Ovary (tissue), 10 donors: ENCODE measurements at regions of chr15 and their contacts with region 1.

Region 1: DNA sequence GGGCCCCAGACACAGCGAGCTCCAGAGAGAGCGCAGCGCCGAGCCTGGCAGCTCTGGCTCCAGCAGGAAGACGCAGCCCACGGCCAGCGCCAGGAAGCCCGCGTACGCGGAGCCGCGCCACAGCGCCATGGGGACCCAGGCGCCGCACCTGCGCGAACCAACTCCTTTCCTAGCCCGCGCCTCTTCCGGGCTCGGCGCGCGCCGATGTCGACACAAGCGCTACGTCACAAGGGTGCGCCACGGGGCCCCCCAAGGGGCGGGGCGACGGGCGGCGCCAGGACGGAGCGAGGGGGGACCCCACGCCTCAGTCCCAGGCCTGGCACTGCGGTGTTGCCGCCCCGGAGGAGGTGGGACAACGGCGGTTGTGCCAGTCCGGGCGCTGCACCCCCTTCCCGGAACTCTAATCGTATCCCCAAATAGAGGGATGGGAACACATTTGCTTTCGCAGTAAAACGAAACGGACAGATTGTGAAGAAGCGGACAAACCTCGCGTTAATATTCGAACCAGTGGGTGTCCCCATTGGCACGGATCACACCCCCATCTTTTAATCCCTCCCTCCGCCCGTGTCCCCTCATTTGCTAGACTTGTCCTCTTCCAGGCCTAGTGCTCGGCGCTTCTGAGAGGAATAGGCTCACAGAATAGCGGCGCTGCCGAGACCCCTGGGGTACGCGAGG is at the start of gene ADPGK:
- DNase-seq: peak; percentile 87 to 96 (median 93)
- H3K4me3 ChIP-seq: peak within 1 kb of the TSS; percentile 82
- H3K27ac ChIP-seq: peak within 1 kb of the TSS; percentile 79 to 94
- H3K4me1 ChIP-seq: peaks cover 10% of the 10 kb centered on the region
- H3K27me3 ChIP-seq: no peaks in the 10 kb centered on the region
- CTCF ChIP-seq: peak in 1 of 3 donors; percentile 45
- EP300 ChIP-seq: peak; percentile 35
- POLR2A ChIP-seq: peak; percentile 83
- total RNA-seq, gene ADPGK: 20.3 to 46.1 (median 28.1) TPM

Region 2: GRCh38 chr15:72473614-72474465 is 309.9 kb before region 1 on chr15 and contains the start of gene ARIH1:
- intact Hi-C with region 1: loop called in 1 of 4 experiments (anchors 10 kb)
- DNase-seq: peak; percentile 97 to 99 (median 99)
- H3K4me3 ChIP-seq: peak within 1 kb of the TSS; percentile 88
- H3K27ac ChIP-seq: peak within 1 kb of the TSS; percentile 99 to 100
- H3K4me1 ChIP-seq: peaks cover 11% of the 10 kb centered on the region
- H3K27me3 ChIP-seq: no peaks in the 10 kb centered on the region
- CTCF ChIP-seq: peak in 2 of 3 donors; percentile 7 to 23
- EP300 ChIP-seq: peak; percentile 59
- POLR2A ChIP-seq: peak; percentile 100
- total RNA-seq, gene ARIH1: 47.9 to 211 (median 171) TPM

Region 3: GRCh38 chr15:72722071-72722696 is 61.5 kb before region 1 on chr15:
- intact Hi-C with region 1: loop called in 1 of 4 experiments (anchors 10 kb)
- DNase-seq: peak; percentile 19 to 63 (median 51)
- H3K4me3 ChIP-seq: no peak overlapping the region
- H3K27ac ChIP-seq: no peak overlapping the region
- H3K4me1 ChIP-seq: no peaks in the 10 kb centered on the region
- H3K27me3 ChIP-seq: no peaks in the 10 kb centered on the region
- CTCF ChIP-seq: peak in 2 of 3 donors; percentile 23 to 31
- EP300 ChIP-seq: no peak
- POLR2A ChIP-seq: no peak

Region 4: GRCh38 chr15:73081321-73081958 is 297.7 kb after region 1 on chr15:
- intact Hi-C with region 1: loop called in 1 of 4 experiments (anchors 5 kb)
- DNase-seq: peak in 1 of 5 donors; percentile 27
- H3K4me3 ChIP-seq: no peak overlapping the region
- H3K27ac ChIP-seq: no peak overlapping the region
- H3K4me1 ChIP-seq: peaks cover 5% of the 10 kb centered on the region
- H3K27me3 ChIP-seq: no peaks in the 10 kb centered on the region
- CTCF ChIP-seq: peak; percentile 62 to 67 (median 66)
- EP300 ChIP-seq: no peak
- POLR2A ChIP-seq: no peak

Region 5: DNA sequence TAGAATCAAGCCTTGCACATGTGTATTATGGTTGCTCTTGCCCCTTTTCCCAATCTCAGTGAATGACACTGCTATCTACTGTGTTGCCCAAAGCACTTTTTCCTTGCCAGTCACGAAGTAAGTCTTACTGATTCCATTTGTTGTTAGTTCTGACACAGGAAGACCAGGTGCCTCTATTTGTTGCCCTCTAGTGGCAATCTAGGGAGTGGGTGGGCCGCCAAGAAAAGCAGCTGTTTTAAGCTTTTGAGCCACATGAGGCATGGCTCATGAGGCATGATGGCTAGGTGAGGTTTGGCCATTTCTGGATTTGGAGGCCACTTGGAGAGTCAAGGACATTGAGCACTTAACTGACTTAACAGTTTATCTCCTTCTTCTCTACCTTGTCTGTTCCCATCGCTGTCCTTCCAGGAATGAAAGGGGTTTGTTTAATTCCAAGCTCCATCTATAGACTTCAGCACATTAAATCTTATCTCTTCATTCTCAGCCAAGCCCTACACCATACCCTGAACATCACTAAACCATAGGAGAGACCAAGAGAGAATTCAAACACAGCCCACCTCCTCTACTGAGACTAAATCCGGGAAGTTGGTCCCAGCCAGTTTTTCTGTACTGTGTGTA is 481.9 kb after region 1 on chr15:
- intact Hi-C with region 1: loop called in 1 of 4 experiments (anchors 10 kb)
- DNase-seq: peak; percentile 12 to 50 (median 28)
- H3K4me3 ChIP-seq: no peak overlapping the region
- H3K27ac ChIP-seq: no peak overlapping the region
- H3K4me1 ChIP-seq: no peaks in the 10 kb centered on the region
- H3K27me3 ChIP-seq: no peaks in the 10 kb centered on the region
- CTCF ChIP-seq: peak in 1 of 3 donors; percentile 26
- EP300 ChIP-seq: no peak
- POLR2A ChIP-seq: no peak